ENCODE measurements at regions of chr12 and their contacts with region 1.

Region 1: DNA sequence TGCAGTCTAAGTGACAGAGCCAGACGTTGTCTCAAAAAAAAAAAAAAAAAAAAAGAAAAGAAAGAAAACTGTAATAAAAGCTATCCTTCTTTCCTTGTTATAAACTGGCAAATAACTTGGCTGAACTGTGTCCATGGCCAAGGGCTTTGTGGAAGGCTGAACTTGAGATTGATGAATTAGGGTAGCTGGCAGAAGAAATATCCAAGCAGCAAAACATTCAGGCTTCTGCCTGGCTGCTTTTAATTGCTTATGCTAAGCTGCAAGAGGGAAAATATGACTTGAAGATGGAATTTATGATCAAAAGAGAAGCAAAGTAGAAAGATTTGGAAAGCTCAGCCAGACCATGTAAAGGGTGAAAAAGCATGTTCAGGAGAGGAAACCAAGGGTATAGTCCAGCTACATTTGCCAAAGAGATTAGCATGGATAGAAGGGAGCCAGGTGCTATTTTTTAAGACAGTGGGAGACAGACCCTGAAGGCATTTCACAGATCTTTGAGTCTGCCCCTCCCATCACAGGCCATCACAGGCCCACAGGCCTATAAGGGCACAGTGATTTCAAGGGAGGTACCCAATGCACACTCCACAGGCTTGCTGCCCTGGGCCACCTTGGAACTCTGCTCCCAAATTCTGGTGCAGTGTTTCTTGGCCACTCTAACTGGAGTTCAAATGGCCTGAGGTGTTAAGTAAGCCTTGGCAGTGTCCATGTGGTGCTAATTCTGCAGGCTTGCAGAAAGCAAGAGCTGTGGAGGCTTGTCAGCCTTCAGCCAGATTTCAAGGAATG is 226.0 kb downstream of the AEBP2 start:
- DNase-seq: no peak
- H3K4me3 ChIP-seq: no peak overlapping the region
- H3K27ac ChIP-seq: peak overlapping the region in 1 of 2 donors; percentile 25
- H3K4me1 ChIP-seq: peaks cover 0 to 12% (median 9%) of the 10 kb centered on the region in 4 donors
- H3K27me3 ChIP-seq: no peaks in the 10 kb centered on the region
- CTCF ChIP-seq: no peak

Region 2: DNA sequence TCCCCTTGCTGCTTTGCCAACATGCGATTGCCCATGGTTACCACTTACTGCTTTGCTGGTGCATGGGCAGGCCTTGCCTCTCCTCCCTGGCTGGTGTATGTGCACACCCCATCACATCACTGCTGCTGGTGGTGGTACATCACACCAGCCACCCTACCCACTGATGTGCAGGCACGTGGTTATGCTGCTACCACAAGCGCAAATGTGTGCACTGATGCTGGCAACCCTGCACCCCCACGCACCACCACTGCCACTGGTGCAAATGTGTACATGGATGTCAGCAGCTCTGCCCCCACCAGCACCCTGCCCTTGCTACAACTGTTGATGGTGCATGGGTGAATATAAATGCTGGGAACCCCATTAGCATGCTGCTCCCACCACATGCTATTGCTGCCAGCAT is 35.7 kb after region 1 on chr12:
- intact Hi-C with region 1: loop called (anchors 5 kb)
- DNase-seq: no peak
- H3K4me3 ChIP-seq: no peak overlapping the region
- H3K27ac ChIP-seq: no peak overlapping the region
- H3K4me1 ChIP-seq: no peaks in the 10 kb centered on the region
- H3K27me3 ChIP-seq: no peaks in the 10 kb centered on the region
- CTCF ChIP-seq: no peak